ENCODE measurements at regions of chr3 and their contacts with region 1.

Region 1: GRCh38 chr3:50611464-50612233 is at the start of gene CISH:
- DNase-seq: peak; percentile 92
- CTCF ChIP-seq: peak; percentile 38

Region 2: GRCh38 chr3:50241163-50241562 is 370.5 kb before region 1 on chr3:
- CTCF ChIA-PET with region 1: no interaction called
- POLR2A ChIA-PET with region 1: no interaction called
- DNase-seq: no peak
- CTCF ChIP-seq: no peak

Region 3: GRCh38 chr3:50519471-50520089 is 92.1 kb before region 1 on chr3:
- CTCF ChIA-PET with region 1: interaction called, 12 read pairs
- POLR2A ChIA-PET with region 1: no interaction called
- DNase-seq: peak; percentile 77
- CTCF ChIP-seq: peak; percentile 98

Region 4: GRCh38 chr3:50568947-50569749 is 42.5 kb before region 1 on chr3 and contains the start of gene HEMK1:
- CTCF ChIA-PET with region 1: interaction called, 419 read pairs
- POLR2A ChIA-PET with region 1: interaction called, 7 read pairs
- DNase-seq: peak; percentile 99
- CTCF ChIP-seq: no peak

Region 5: GRCh38 chr3:50600841-50601591 is 10.6 kb before region 1 on chr3:
- CTCF ChIA-PET with region 1: interaction called, 54 read pairs
- POLR2A ChIA-PET with region 1: no interaction called
- DNase-seq: peak; percentile 68
- CTCF ChIP-seq: no peak

Region 6: GRCh38 chr3:50644561-50644960 is 32.9 kb after region 1 on chr3:
- CTCF ChIA-PET with region 1: interaction called, 240 read pairs
- POLR2A ChIA-PET with region 1: no interaction called
- DNase-seq: no peak
- CTCF ChIP-seq: no peak

Region 7: GRCh38 chr3:51371943-51372557 is 760.4 kb after region 1 on chr3:
- CTCF ChIA-PET with region 1: interaction called, 77 read pairs
- POLR2A ChIA-PET with region 1: no interaction called
- DNase-seq: peak; percentile 45
- CTCF ChIP-seq: peak; percentile 71

Region 8: DNA sequence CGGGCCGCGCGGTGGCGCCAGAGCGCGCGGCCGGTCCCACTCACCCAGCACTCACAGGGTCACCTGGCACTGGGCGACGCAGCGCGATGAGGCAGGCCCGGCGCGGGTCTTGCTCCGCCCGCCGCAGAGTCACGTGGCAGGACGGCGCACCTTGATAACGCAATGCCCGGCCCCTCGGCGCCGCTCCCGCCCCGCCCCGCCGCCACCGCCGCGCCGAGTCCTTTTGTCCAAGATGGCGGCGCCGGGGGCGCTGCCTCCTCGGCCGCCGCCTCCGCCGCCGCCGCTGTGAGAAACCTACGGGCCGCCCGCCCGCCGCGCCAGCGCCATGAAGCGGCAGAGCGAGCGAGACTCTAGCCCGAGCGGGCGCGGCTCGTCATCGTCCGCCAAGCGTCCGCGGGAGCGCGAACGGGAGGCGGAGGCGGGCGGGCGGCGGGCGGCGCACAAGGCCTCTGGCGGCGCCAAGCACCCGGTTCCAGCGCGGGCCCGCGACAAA is 779.5 kb after region 1 on chr3 and contains the start of gene RBM15B:
- CTCF ChIA-PET with region 1: interaction called, 30 read pairs
- POLR2A ChIA-PET with region 1: no interaction called
- DNase-seq: peak; percentile 97
- CTCF ChIP-seq: peak; percentile 95